A549 (cell line): ENCODE measurements at regions of chr18 and their contacts with region 1.

Region 1: GRCh38 chr18:70384181-70384790 is 95.4 kb downstream of the SOCS6 start:
- DNase-seq: peak; percentile 31 to 91
- ATAC-seq: peak; percentile 89 to 99
- H3K4me3 ChIP-seq: peak overlapping the region; percentile 15; the same call in 2 of the 3 replicates
- H3K27ac ChIP-seq: peak overlapping the region; percentile 97 to 98
- H3K4me1 ChIP-seq: peaks cover 62% of the 10 kb centered on the region
- CTCF ChIP-seq: no peak
- EP300 ChIP-seq: peak; percentile 34 to 69; a peak in 3 of 5 replicates
- POLR2A ChIP-seq: no peak
- RAD21 ChIP-seq: peak in 1 of 2 experiments; percentile 15; a peak in 2 of 5 replicates

Region 2: DNA sequence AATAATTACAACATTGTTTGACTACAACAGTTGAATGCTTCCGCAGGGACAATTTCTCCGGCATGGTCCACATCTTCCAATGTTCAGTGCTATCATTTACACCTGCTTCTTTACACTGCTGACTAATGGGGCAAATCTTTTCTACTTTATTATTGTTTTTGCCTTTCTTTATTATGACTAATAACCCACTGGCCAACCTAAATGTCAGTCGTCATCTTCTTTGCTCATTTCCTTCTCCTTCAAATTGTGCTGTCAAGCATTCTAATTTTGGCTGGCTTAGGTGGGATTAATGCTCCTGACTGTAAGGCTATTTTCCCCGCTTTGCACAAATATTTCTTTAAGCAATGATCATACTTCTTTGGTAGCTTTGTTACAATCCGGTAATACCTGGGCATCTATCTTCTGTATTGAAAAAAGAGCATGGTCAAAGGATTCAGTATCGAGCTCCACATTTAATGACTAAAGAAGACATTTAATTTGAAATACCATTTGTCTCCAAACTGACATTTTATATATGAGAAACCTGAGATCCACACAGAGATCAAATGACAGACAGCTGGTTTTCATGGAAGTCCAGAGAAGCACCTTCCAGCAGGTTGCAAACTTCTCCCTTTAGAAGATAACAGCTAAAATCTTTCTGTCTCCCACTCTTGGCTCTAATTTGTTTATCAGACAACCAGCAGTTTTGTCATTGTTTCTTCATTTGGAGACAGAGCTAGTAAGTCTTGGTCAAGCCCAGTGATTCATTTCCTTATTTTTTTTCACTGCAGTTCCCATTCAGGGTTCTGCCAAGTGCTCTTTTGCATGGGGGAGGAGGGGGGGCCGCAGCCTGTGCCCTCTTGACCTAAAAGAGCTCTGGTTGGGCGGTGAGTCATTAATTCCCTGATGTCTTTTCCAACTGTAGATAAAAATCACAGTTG is 37.4 kb after region 1 on chr18:
- CTCF ChIA-PET with region 1: no interaction called
- POLR2A ChIA-PET with region 1: interaction called, 20 read pairs
- DNase-seq: peak; percentile 67 to 96
- ATAC-seq: peak; percentile 87 to 92
- H3K4me3 ChIP-seq: no peak overlapping the region
- H3K27ac ChIP-seq: peak overlapping the region; percentile 93 to 100
- H3K4me1 ChIP-seq: peaks cover 59% of the 10 kb centered on the region
- CTCF ChIP-seq: no peak
- EP300 ChIP-seq: peak; percentile 92 to 96; a peak in 4 of 5 replicates
- POLR2A ChIP-seq: no peak
- RAD21 ChIP-seq: peak; percentile 37 to 58; a peak in 4 of 5 replicates